ENCODE measurements at regions of chr9 and their contacts with region 1.

Region 1: DNA sequence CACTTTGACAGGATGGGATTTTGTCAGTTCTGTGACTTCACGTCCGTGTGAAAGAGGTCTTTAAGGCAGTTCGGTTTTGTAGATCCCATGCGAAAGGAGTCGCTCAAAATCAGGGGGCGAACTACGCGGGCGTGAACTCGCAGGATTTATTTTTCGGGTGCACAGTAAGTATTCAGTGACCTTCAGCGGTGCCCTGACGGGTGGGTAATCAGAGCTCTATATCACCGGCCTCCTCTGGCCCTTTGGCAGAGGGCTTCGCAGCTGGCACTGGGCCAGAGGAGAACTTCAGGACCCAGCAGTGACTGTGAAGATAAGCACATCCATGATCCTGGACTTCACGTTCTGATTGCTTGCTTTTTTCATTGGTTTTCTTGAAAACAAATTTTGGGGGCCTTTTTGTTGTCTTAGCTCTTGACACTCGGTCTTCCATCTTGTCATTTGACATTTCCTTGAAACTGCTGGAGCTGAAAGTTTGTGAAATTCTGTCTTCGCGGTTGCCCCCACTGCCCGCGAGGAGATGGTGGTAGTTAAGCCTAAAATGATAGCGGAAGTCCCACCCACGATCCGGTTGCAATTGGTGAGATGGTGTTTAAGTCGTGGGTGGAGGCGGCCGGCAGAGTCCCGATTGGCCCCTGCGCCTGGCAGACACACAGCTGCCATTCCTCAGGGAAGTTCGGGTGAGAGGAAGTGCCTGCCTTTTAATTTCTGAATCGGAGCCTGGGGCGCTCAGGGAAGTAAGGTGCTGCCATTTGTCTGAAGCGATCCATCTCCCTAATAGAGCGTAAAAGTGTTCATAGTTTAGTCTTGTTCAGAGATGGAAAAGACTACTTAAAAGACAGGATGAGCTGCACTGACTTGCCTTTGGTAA is at the start of gene FAM120AOS:
- DNase-seq: peak; percentile 93 to 96 (median 94)
- ATAC-seq: peak; percentile 87 to 96 (median 88)
- H3K4me3 ChIP-seq: peak within 1 kb of the TSS; percentile 68 to 99 (median 93)
- H3K27ac ChIP-seq: peak within 1 kb of the TSS; percentile 77 to 97 (median 96)
- H3K4me1 ChIP-seq: peaks cover under 1 to 66% (median 43%) of the 10 kb centered on the region in 12 donors
- H3K27me3 ChIP-seq: no peaks in the 10 kb centered on the region
- CTCF ChIP-seq: no peak
- POLR2A ChIP-seq: peak; percentile 10 to 68
- total RNA-seq, gene FAM120AOS: 27.2 to 38.8 (median 33.7) TPM

Region 2: DNA sequence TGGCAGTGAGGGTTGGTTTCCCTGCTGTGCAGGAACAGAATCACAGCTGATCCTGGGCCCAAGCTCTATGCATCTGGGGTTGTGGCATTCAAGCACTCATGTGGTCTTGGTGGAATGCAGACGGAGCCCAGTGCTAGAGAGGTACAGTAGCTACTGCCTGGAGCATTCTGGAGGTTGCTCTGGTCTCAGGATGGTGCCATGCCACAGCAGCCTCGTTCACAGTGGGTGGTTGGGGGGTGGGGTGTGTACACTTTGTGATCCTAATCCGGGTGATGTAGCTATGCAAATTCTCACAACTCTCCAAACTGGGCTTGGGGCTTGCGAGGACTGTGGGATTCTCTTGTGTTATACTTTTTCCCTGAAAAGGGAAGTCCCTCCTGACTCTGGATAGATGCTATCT is 460.7 kb before region 1 on chr9:
- intact Hi-C with region 1: no loop called
- DNase-seq: no peak
- ATAC-seq: no peak
- H3K4me3 ChIP-seq: no peak overlapping the region
- H3K27ac ChIP-seq: no peak overlapping the region
- H3K4me1 ChIP-seq: peaks cover 0 to 23% (median 0%) of the 10 kb centered on the region in 12 donors
- H3K27me3 ChIP-seq: no peaks in the 10 kb centered on the region
- CTCF ChIP-seq: no peak
- POLR2A ChIP-seq: no peak

Region 3: GRCh38 chr9:93095205-93096130 is 357.8 kb before region 1 on chr9:
- intact Hi-C with region 1: loop called in 3 of 10 experiments (anchors 5 to 10 kb)
- DNase-seq: peak; percentile 100
- ATAC-seq: peak; percentile 85 to 93 (median 90)
- H3K4me3 ChIP-seq: peak overlapping the region; percentile 51 to 100 (median 94)
- H3K27ac ChIP-seq: peak overlapping the region; percentile 80 to 98 (median 96)
- H3K4me1 ChIP-seq: peaks cover 15 to 67% (median 54%) of the 10 kb centered on the region in 12 donors
- H3K27me3 ChIP-seq: no peaks in the 10 kb centered on the region
- CTCF ChIP-seq: no peak
- POLR2A ChIP-seq: peak in 1 of 2 donors; percentile 86

Region 4: GRCh38 chr9:93387791-93388190 is 65.5 kb before region 1 on chr9:
- intact Hi-C with region 1: no loop called
- DNase-seq: no peak
- ATAC-seq: no peak
- H3K4me3 ChIP-seq: no peak overlapping the region
- H3K27ac ChIP-seq: no peak overlapping the region
- H3K4me1 ChIP-seq: no peaks in the 10 kb centered on the region
- H3K27me3 ChIP-seq: no peaks in the 10 kb centered on the region
- CTCF ChIP-seq: no peak
- POLR2A ChIP-seq: no peak

Region 5: GRCh38 chr9:93501406-93501805 is 48.1 kb after region 1 on chr9:
- intact Hi-C with region 1: loop called in 6 of 10 experiments (anchors 5 kb)
- DNase-seq: no peak
- ATAC-seq: peak in 3 of 4 donors; percentile 24 to 57 (median 30)
- H3K4me3 ChIP-seq: peak overlapping the region in 11 of 12 donors; percentile 6 to 63 (median 44)
- H3K27ac ChIP-seq: peak overlapping the region; percentile 28 to 76 (median 56)
- H3K4me1 ChIP-seq: peaks cover 3 to 51% (median 18%) of the 10 kb centered on the region in 12 donors
- H3K27me3 ChIP-seq: no peaks in the 10 kb centered on the region
- CTCF ChIP-seq: no peak
- POLR2A ChIP-seq: no peak

Region 6: DNA sequence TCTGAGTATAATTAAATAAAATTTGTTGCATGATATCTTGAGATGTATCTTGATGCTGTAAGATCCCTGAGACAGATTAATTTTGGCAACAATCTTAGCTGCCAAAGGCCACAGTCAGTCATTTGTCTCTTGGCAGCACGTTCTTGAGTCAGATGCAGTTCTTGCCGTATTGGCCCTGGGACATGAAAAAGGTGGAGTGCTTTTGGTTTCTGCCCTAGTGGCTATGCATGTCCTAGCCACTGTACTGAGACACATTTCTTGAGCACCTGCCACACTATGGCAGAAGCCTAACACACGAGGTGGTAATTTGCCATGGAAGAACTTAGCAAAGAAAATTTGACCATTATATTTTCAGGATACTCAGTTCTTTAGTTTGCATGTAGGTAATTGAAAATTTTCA is 78.1 kb after region 1 on chr9:
- intact Hi-C with region 1: loop called in 2 of 10 experiments (anchors 10 kb)
- DNase-seq: no peak
- ATAC-seq: peak in 2 of 4 donors; percentile 37 to 48
- H3K4me3 ChIP-seq: no peak overlapping the region
- H3K27ac ChIP-seq: no peak overlapping the region
- H3K4me1 ChIP-seq: peaks cover 0 to 15% (median 3%) of the 10 kb centered on the region in 12 donors
- H3K27me3 ChIP-seq: no peaks in the 10 kb centered on the region
- CTCF ChIP-seq: peak in 4 of 12 donors; percentile 8 to 25 (median 12)
- POLR2A ChIP-seq: no peak

Region 7: GRCh38 chr9:93566408-93567270 is 113.4 kb after region 1 on chr9:
- intact Hi-C with region 1: loop called (anchors 1 to 10 kb)
- DNase-seq: peak; percentile 98 to 100 (median 99)
- ATAC-seq: peak; percentile 98 to 99 (median 99)
- H3K4me3 ChIP-seq: peak overlapping the region; percentile 4 to 75 (median 66)
- H3K27ac ChIP-seq: peak overlapping the region; percentile 87 to 98 (median 96)
- H3K4me1 ChIP-seq: peaks cover 0 to 25% (median 11%) of the 10 kb centered on the region in 12 donors
- H3K27me3 ChIP-seq: no peaks in the 10 kb centered on the region
- CTCF ChIP-seq: peak; percentile 94 to 100 (median 98)
- POLR2A ChIP-seq: peak; percentile 74 to 96